Psoas muscle (tissue), 8 donors: ENCODE measurements at regions of chr4 and their contacts with region 1.

Region 1: GRCh38 chr4:82462415-82462831 is 32.0 kb downstream of the ENOPH1 start:
- DNase-seq: peak; percentile 81 to 89
- ATAC-seq: peak; percentile 79 to 96 (median 90)
- H3K4me3 ChIP-seq: no peak overlapping the region
- H3K27ac ChIP-seq: no peak overlapping the region
- H3K4me1 ChIP-seq: no peaks in the 10 kb centered on the region
- H3K27me3 ChIP-seq: no peaks in the 10 kb centered on the region
- CTCF ChIP-seq: peak; percentile 87

Region 2: GRCh38 chr4:82739316-82740179 is 277.1 kb after region 1 on chr4:
- intact Hi-C with region 1: loop called (anchors 2 to 5 kb)
- DNase-seq: peak; percentile 56 to 79
- ATAC-seq: peak; percentile 64 to 94 (median 91)
- H3K4me3 ChIP-seq: no peak overlapping the region
- H3K27ac ChIP-seq: no peak overlapping the region
- H3K4me1 ChIP-seq: no peaks in the 10 kb centered on the region
- H3K27me3 ChIP-seq: no peaks in the 10 kb centered on the region
- CTCF ChIP-seq: peak; percentile 85

Region 3: DNA sequence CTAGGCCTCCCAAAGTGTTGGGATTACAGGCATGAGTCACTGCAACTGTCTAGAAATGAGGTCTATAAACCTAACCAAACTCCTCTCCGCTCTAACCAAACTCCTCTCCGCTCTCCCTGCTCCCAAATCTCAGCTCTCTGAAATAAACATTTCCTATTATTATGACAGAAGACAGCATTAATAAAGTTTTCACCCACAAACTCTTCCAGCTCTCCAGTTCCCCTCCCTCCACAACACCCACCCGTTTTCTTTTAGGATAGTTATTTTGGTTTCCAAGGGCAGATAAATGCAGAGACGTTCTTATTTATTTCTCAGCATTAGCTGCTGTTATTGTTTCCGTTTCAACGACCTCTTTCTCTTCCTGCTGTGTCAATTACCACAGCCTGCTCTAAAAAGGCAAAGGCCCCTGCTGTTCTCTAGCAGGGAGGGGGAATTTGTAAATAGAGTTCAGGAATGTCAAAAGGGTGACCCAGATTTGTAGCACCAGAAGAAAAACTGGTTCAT is 349.5 kb after region 1 on chr4:
- intact Hi-C with region 1: loop called in 1 of 2 experiments (anchors 10 kb)
- DNase-seq: no peak
- ATAC-seq: no peak
- H3K4me3 ChIP-seq: no peak overlapping the region
- H3K27ac ChIP-seq: no peak overlapping the region
- H3K4me1 ChIP-seq: no peaks in the 10 kb centered on the region
- H3K27me3 ChIP-seq: no peaks in the 10 kb centered on the region
- CTCF ChIP-seq: no peak

Region 4: DNA sequence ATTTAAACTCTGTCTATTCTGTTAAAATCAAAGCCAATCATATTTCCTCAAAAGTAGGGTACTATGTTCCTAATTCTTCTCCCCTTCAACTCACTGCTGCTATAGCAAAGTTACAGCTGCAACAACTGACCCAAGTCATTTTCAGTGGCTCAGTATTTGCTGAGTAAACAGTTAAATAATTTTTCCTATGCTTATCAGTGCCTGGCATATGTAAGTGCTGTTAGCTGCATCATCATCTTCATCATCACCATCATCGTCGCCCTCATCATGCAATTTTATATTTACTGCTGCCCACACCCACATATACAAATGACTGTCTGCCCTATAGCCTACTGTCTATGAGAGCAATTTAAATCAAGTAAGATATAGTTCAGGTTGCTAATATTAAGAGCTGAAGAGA is 800.3 kb after region 1 on chr4:
- intact Hi-C with region 1: loop called (anchors 2 to 5 kb)
- DNase-seq: no peak
- ATAC-seq: no peak
- H3K4me3 ChIP-seq: no peak overlapping the region
- H3K27ac ChIP-seq: no peak overlapping the region
- H3K4me1 ChIP-seq: peaks cover 15% of the 10 kb centered on the region
- H3K27me3 ChIP-seq: no peaks in the 10 kb centered on the region
- CTCF ChIP-seq: no peak

Region 5: GRCh38 chr4:83284193-83285054 is 822.0 kb after region 1 on chr4 and contains the start of gene COQ2:
- intact Hi-C with region 1: loop called in 1 of 2 experiments (anchors 10 kb)
- DNase-seq: peak; percentile 97 to 99
- ATAC-seq: peak; percentile 95 to 97 (median 96)
- H3K4me3 ChIP-seq: peak within 1 kb of the TSS; percentile 82
- H3K27ac ChIP-seq: peak within 1 kb of the TSS; percentile 99
- H3K4me1 ChIP-seq: peaks cover 23% of the 10 kb centered on the region
- H3K27me3 ChIP-seq: no peaks in the 10 kb centered on the region
- CTCF ChIP-seq: peak; percentile 20
- total RNA-seq, gene COQ2: 11.6 to 29.1 (median 20.3) TPM